ENCODE measurements at regions of chr13 and their contacts with region 1.

Region 1: DNA sequence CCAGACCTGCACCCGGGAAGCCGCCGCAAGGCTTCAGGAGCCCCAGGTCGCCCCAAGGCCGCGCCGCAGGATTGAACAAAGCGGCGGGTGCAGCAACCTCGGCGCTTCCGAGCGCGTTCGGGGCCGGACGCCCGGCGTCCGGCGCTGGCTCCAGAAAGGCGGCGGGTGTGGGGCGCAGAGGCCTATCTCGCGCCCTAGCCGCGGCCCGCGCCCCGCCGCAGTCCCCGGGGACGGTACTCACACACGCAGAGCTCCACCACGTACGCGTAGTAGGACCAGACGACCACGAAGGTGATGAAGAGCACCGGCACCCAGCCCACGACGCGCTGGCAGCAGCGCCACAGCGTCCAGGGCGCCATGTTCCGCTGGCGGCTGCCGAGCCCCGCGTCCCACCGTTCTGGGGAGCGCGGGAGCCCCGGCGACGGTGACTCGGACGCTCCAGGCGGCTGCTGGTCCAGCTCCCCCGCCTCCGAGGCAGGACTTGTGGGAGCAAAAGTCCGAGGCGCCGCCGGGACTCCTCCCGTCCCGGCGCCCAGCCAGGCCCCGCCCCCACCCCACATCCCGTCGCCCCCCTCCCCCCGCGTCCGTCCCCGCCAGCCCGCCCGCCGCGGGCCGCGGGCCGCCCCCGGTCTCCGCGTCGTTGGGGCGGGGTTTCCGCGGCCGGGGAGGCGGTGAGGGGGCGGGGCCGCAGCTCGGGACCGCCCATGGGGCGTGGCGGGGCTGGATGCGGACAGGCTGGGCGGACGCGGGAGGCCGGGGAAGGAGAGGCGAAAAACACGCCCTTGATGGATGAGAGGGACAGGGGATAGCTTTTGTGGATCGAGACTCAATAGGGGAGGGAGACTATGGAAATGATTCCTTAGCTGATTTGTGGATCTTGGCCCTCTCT is at the start of gene ZDHHC20:
- DNase-seq: no peak
- ATAC-seq: peak; percentile 93
- H3K4me3 ChIP-seq: peak within 1 kb of the TSS; percentile 83 to 94
- H3K27ac ChIP-seq: peak within 1 kb of the TSS; percentile 99
- H3K4me1 ChIP-seq: peaks cover 6 to 13% of the 10 kb centered on the region in 2 experiments; a peak in 3 of 4 replicates
- H3K27me3 ChIP-seq: no peaks in the 10 kb centered on the region
- CTCF ChIP-seq: no peak
- POLR2A ChIP-seq: peak; percentile 32
- RAD21 ChIP-seq: no peak
- total RNA-seq, gene ZDHHC20: 110 TPM

Region 2: GRCh38 chr13:21435710-21436151 is 23.3 kb before region 1 on chr13:
- CTCF ChIA-PET with region 1: no interaction called
- POLR2A ChIA-PET with region 1: interaction called, 3 read pairs
- RAD21 ChIA-PET with region 1: no interaction called
- intact Hi-C with region 1: loop called (anchors 2 kb)
- DNase-seq: peak; percentile 87
- ATAC-seq: peak; percentile 95
- H3K4me3 ChIP-seq: no peak overlapping the region; a peak in 1 of 4 replicates
- H3K27ac ChIP-seq: peak overlapping the region; percentile 35; the same call in 1 of the 2 replicates
- H3K4me1 ChIP-seq: peaks cover 14 to 32% of the 10 kb centered on the region in 2 experiments
- H3K27me3 ChIP-seq: no peaks in the 10 kb centered on the region
- CTCF ChIP-seq: no peak
- POLR2A ChIP-seq: no peak
- RAD21 ChIP-seq: 0 out of 2 replicates have a peak, but pooled peaks have one; percentile 15